Ovary (tissue), 10 donors: ENCODE measurements at regions of chr7 and their contacts with region 1.

Region 1: GRCh38 chr7:95723592-95724180 is 48.7 kb upstream of the DYNC1I1 start:
- DNase-seq: peak; percentile 29 to 47 (median 42)
- H3K4me3 ChIP-seq: no peak overlapping the region
- H3K27ac ChIP-seq: no peak overlapping the region
- H3K4me1 ChIP-seq: no peaks in the 10 kb centered on the region
- H3K27me3 ChIP-seq: no peaks in the 10 kb centered on the region
- CTCF ChIP-seq: peak in 2 of 3 donors; percentile 29 to 43
- EP300 ChIP-seq: no peak
- POLR2A ChIP-seq: no peak

Region 2: DNA sequence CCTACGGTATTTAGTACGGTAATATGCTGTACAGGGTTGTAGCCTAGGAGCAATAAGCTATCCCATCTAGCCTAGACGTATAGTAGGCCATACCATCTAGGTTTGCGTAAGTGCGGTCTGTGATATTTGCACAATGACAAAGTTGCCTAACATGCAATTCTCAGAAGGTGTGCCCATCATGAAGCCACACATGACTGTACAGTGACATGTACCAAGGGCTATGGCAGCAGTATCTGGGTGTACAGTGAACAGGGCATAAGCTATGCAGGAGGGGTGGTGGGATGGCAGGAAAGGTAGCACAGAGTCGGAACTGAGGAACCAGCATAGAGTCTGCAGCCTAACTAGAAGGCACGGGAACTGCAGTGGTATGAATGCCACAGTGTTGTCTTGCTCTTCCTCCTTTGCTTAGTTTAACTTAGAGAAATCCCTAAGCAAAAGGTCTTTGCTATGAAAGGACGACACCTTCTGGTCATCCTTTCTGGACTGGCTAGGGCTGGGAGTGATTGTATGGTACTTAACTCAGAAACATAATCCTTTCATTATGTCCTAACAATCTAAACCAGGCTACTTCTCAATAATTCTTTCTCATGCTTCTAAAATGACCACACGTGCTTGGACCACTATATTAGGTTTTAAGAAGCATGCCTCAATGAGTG is 142.2 kb after region 1 on chr7:
- intact Hi-C with region 1: loop called (anchors 2 to 10 kb)
- DNase-seq: no peak
- H3K4me3 ChIP-seq: no peak overlapping the region
- H3K27ac ChIP-seq: no peak overlapping the region
- H3K4me1 ChIP-seq: no peaks in the 10 kb centered on the region
- H3K27me3 ChIP-seq: no peaks in the 10 kb centered on the region
- CTCF ChIP-seq: no peak
- EP300 ChIP-seq: no peak
- POLR2A ChIP-seq: no peak

Region 3: DNA sequence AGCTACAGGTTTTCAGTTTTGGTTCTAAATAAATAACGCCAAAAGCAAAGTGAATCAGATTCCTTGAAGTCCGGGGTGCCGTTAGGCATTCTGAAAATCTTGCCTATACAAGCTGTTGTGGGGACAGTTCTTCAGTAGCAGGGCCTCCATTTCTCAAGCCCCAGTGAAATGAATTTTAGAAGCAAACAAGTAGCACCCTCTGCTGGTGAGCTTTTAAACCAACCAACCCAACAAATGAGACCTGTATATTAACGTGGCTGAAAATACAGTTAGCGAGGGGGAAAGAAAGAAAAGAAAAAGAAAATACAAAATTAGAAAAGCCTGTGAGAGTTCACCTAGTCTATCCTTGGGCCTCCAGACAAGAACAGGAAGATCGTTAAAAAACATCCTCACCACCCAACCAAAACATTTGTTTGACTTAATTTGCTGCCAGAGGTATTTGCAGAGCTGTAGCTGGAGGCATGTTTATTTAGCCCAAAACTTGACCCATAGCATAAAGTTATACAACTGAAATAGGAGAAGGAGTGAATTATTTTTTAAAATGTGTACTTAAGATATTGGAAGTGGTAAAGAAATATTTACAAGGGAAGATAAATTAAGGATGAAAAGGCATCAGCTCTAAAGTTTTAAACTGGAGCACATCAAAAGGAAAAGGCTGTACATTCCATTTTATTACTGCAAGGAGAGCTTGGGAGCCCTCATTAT is 147.5 kb after region 1 on chr7:
- intact Hi-C with region 1: loop called (anchors 2 to 10 kb)
- DNase-seq: peak in 4 of 5 donors; percentile 21 to 53 (median 24)
- H3K4me3 ChIP-seq: no peak overlapping the region
- H3K27ac ChIP-seq: no peak overlapping the region
- H3K4me1 ChIP-seq: no peaks in the 10 kb centered on the region
- H3K27me3 ChIP-seq: no peaks in the 10 kb centered on the region
- CTCF ChIP-seq: peak; percentile 30 to 52 (median 41)
- EP300 ChIP-seq: no peak
- POLR2A ChIP-seq: no peak